CD4-positive, alpha-beta T cell (primary cell): ENCODE measurements at regions of chr2 and their contacts with region 1.

Region 1: DNA sequence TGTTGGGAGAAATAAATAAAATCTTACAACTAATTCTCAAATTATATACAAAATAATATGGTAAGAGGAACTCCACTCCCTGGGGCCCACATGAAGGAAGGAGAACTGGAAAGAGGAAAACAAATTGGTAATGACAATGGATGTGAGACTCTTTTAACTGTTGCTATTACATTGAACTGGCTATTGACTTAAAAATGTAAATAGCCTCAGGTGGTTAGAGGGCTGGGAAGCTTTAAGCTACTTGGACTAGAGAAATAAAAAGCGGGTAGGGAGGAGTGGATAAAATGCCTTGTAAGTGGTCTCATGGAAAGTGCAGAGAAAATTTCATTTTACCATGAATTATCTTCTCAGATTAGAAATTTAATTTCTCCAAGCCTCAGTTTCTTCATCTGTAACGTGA is 64.1 kb downstream of the KCNJ3 start:
- DNase-seq: no peak
- ATAC-seq: no peak
- H3K4me3 ChIP-seq: no peak overlapping the region
- H3K4me3 Mint-ChIP-seq: no peak overlapping the region
- H3K27ac ChIP-seq: no peak overlapping the region
- H3K27ac Mint-ChIP-seq: no peak overlapping the region
- H3K4me1 ChIP-seq: no peaks in the 10 kb centered on the region
- H3K4me1 Mint-ChIP-seq: no peaks in the 10 kb centered on the region
- H3K27me3 ChIP-seq: no peaks in the 10 kb centered on the region
- H3K27me3 Mint-ChIP-seq: no peaks in the 10 kb centered on the region
- CTCF ChIP-seq: no peak

Region 2: GRCh38 chr2:155404433-155405002 is 641.9 kb after region 1 on chr2:
- CTCF ChIA-PET with region 1: no interaction called
- POLR2A ChIA-PET with region 1: no interaction called
- intact Hi-C with region 1: loop called in 1 of 2 experiments (anchors 5 kb)
- DNase-seq: no peak
- ATAC-seq: no peak
- H3K4me3 ChIP-seq: no peak overlapping the region
- H3K4me3 Mint-ChIP-seq: no peak overlapping the region
- H3K27ac ChIP-seq: no peak overlapping the region
- H3K27ac Mint-ChIP-seq: no peak overlapping the region
- H3K4me1 ChIP-seq: no peaks in the 10 kb centered on the region
- H3K4me1 Mint-ChIP-seq: no peaks in the 10 kb centered on the region
- H3K27me3 ChIP-seq: no peaks in the 10 kb centered on the region
- H3K27me3 Mint-ChIP-seq: no peaks in the 10 kb centered on the region
- CTCF ChIP-seq: no peak